Activated T-helper 2 cell treated with anti-CD3 and anti-CD28 coated beads, Interferon-gamma antibody, Interleukin-2, Interleukin-4, amounts not matched to agents 10 μg/mL and 5 μg/mL and 100 μg/mL, durations not matched to agents 14 hours and 24 hours and 36 hours (primary cell): ENCODE measurements at regions of chr11 and their contacts with region 1.

Region 1: GRCh38 chr11:67613960-67614715 is 7.4 kb downstream of the NDUFV1 start:
- DNase-seq: peak; percentile 81
- H3K4me3 Mint-ChIP-seq: peak overlapping the region; percentile 74
- H3K27ac Mint-ChIP-seq: peak overlapping the region; percentile 98
- H3K4me1 Mint-ChIP-seq: peaks cover 22% of the 10 kb centered on the region
- H3K27me3 Mint-ChIP-seq: no peaks in the 10 kb centered on the region

Region 2: DNA sequence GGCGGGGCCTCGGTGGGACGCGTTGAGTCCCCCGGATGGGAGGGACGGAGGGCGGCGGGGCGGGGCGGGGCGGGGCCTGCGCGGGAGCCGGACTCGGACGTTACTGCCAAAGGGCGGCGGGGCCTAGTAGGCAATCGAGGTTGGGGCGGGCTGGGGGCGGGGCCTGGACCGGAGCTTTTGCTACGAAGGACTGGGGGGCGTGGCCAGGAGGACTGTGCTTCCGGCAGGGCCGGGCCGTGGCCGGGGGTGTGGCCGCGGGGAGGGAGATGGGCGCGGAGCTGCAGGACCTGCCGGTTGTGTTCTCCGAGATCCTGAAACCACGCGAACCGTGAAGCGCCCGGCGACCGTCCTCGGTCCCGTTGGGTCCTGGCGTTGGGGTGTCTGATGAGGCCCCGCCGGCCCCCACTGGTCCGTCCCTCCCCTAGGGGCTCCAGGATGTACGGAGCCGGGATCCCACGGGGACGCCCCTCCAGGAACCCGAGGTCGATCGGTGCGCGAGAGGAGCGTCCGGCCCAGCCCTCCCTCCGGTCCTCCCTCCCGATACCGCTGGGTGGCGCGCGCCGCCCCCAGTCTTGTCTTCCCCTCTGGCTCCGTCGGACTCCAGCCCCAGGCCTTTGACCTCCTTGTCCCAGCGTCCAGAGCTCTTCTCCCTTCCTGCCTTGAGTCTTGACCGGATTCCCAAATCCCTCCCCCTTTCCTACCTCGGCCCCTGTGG is 16.2 kb after region 1 on chr11:
- intact Hi-C with region 1: loop called (anchors 1 kb)
- DNase-seq: peak; percentile 95
- H3K4me3 Mint-ChIP-seq: peak overlapping the region; percentile 85
- H3K27ac Mint-ChIP-seq: peak overlapping the region; percentile 93
- H3K4me1 Mint-ChIP-seq: peaks cover 9% of the 10 kb centered on the region
- H3K27me3 Mint-ChIP-seq: no peaks in the 10 kb centered on the region

Region 3: GRCh38 chr11:67705264-67705663 is 91.1 kb after region 1 on chr11:
- intact Hi-C with region 1: no loop called
- DNase-seq: no peak
- H3K4me3 Mint-ChIP-seq: no peak overlapping the region
- H3K27ac Mint-ChIP-seq: no peak overlapping the region
- H3K4me1 Mint-ChIP-seq: no peaks in the 10 kb centered on the region
- H3K27me3 Mint-ChIP-seq: peaks cover 12% of the 10 kb centered on the region